Naive thymus-derived CD4-positive, alpha-beta T cell (primary cell): ENCODE measurements at regions of chr1 and their contacts with region 1.

Region 1: GRCh38 chr1:98369463-98369862 is 292.1 kb upstream of the SNX7 start:
- DNase-seq: no peak
- ATAC-seq: no peak
- H3K4me3 ChIP-seq: no peak overlapping the region
- H3K4me3 Mint-ChIP-seq: no peak overlapping the region
- H3K27ac ChIP-seq: no peak overlapping the region
- H3K27ac Mint-ChIP-seq: no peak overlapping the region
- H3K4me1 ChIP-seq: peaks cover 0 to 3% of the 10 kb centered on the region in 2 donors
- H3K4me1 Mint-ChIP-seq: peaks cover 0 to 5% (median 0%) of the 10 kb centered on the region in 7 donors
- H3K27me3 ChIP-seq: no peaks in the 10 kb centered on the region
- H3K27me3 Mint-ChIP-seq: peaks cover 0 to 5% (median 0%) of the 10 kb centered on the region in 5 donors

Region 2: GRCh38 chr1:98104289-98104688 is 265.2 kb before region 1 on chr1:
- CTCF ChIA-PET with region 1: no interaction called
- POLR2A ChIA-PET with region 1: no interaction called
- intact Hi-C with region 1: no loop called
- DNase-seq: no peak
- ATAC-seq: no peak
- H3K4me3 ChIP-seq: no peak overlapping the region
- H3K4me3 Mint-ChIP-seq: no peak overlapping the region
- H3K27ac ChIP-seq: no peak overlapping the region
- H3K27ac Mint-ChIP-seq: no peak overlapping the region
- H3K4me1 ChIP-seq: no peaks in the 10 kb centered on the region
- H3K4me1 Mint-ChIP-seq: no peaks in the 10 kb centered on the region
- H3K27me3 ChIP-seq: no peaks in the 10 kb centered on the region
- H3K27me3 Mint-ChIP-seq: peaks cover 0 to 3% (median 0%) of the 10 kb centered on the region in 5 donors

Region 3: GRCh38 chr1:98267423-98267822 is 102.0 kb before region 1 on chr1:
- CTCF ChIA-PET with region 1: no interaction called
- POLR2A ChIA-PET with region 1: interaction called, 11 read pairs
- intact Hi-C with region 1: no loop called
- DNase-seq: no peak
- ATAC-seq: no peak
- H3K4me3 ChIP-seq: no peak overlapping the region
- H3K4me3 Mint-ChIP-seq: no peak overlapping the region
- H3K27ac ChIP-seq: no peak overlapping the region
- H3K27ac Mint-ChIP-seq: no peak overlapping the region
- H3K4me1 ChIP-seq: no peaks in the 10 kb centered on the region
- H3K4me1 Mint-ChIP-seq: no peaks in the 10 kb centered on the region
- H3K27me3 ChIP-seq: no peaks in the 10 kb centered on the region
- H3K27me3 Mint-ChIP-seq: no peaks in the 10 kb centered on the region